ENCODE measurements at regions of chr1 and their contacts with region 1.

Region 1: GRCh38 chr1:2300851-2301606 is 72.9 kb downstream of the SKI start:
- DNase-seq: no peak
- H3K4me3 ChIP-seq: no peak overlapping the region
- H3K27ac ChIP-seq: no peak overlapping the region
- H3K4me1 ChIP-seq: peaks cover 33% of the 10 kb centered on the region
- H3K27me3 ChIP-seq: no peaks in the 10 kb centered on the region
- CTCF ChIP-seq: no peak

Region 2: GRCh38 chr1:2229037-2229864 is 71.8 kb before region 1 on chr1:
- CTCF ChIA-PET with region 1: no interaction called
- dilution Hi-C with region 1: loop called (anchors 5 kb)
- in situ Hi-C with region 1: no loop called
- intact Hi-C with region 1: no loop called
- DNase-seq: peak; percentile 53
- H3K4me3 ChIP-seq: peak overlapping the region; percentile 57 to 81 (median 68)
- H3K27ac ChIP-seq: peak overlapping the region; percentile 61
- H3K4me1 ChIP-seq: peaks cover 39% of the 10 kb centered on the region
- H3K27me3 ChIP-seq: no peaks in the 10 kb centered on the region
- CTCF ChIP-seq: no peak

Region 3: GRCh38 chr1:2270260-2271100 is 30.5 kb before region 1 on chr1:
- CTCF ChIA-PET with region 1: no interaction called
- dilution Hi-C with region 1: loop called (anchors 5 kb)
- in situ Hi-C with region 1: no loop called
- intact Hi-C with region 1: no loop called
- DNase-seq: no peak
- H3K4me3 ChIP-seq: no peak overlapping the region
- H3K27ac ChIP-seq: no peak overlapping the region
- H3K4me1 ChIP-seq: peaks cover 17% of the 10 kb centered on the region
- H3K27me3 ChIP-seq: no peaks in the 10 kb centered on the region
- CTCF ChIP-seq: no peak

Region 4: DNA sequence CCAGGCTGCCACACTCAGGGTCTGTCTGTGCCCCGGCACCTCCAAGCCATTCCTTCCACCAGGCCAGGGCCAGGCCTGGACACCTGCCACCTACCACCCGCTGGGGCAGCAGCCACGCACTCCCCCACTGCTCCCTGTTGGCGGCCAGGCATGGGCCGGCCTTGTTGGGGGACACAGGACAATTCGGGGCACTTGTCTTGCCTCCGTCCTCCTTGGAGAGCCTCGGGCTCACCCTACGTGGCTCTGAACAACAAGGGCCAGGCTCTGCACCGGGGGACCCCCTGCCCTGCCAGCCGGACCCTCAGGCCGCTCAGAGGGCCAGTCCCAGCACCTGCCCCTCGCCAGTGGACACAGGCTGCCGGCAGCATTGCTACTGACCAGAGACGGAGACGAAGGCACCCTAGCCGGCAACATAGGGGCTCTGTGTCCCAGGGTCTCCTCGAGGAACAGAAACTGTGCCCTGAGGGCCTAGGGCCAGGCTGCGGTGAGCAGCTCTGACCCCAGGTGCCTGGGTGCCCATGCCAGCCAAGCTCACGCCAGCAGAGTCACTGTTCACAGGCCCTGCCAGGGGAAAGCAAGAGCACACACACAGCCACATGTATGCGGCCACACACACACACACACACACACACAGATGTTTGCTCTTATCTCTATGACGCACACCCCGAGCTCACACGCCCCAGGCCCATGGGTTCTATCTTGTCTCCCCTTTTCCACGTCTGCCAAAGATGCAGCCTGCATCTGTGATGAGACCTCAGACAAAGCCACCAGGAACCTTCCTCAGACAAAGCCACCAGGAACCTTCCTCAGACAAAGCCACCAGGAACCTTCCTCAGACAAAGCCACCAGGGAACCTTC is 44.4 kb after region 1 on chr1:
- CTCF ChIA-PET with region 1: no interaction called
- dilution Hi-C with region 1: loop called (anchors 5 kb)
- in situ Hi-C with region 1: no loop called
- intact Hi-C with region 1: no loop called
- DNase-seq: no peak
- H3K4me3 ChIP-seq: no peak overlapping the region
- H3K27ac ChIP-seq: no peak overlapping the region
- H3K4me1 ChIP-seq: peaks cover 7% of the 10 kb centered on the region
- H3K27me3 ChIP-seq: no peaks in the 10 kb centered on the region
- CTCF ChIP-seq: no peak

Region 5: GRCh38 chr1:2404840-2405476 is 103.9 kb after region 1 on chr1:
- CTCF ChIA-PET with region 1: no interaction called
- dilution Hi-C with region 1: loop called (anchors 5 kb)
- in situ Hi-C with region 1: no loop called
- intact Hi-C with region 1: no loop called
- DNase-seq: no peak
- H3K4me3 ChIP-seq: no peak overlapping the region
- H3K27ac ChIP-seq: no peak overlapping the region
- H3K4me1 ChIP-seq: no peaks in the 10 kb centered on the region
- H3K27me3 ChIP-seq: no peaks in the 10 kb centered on the region
- CTCF ChIP-seq: no peak

Region 6: GRCh38 chr1:2429780-2430591 is 129.0 kb after region 1 on chr1:
- CTCF ChIA-PET with region 1: no interaction called
- dilution Hi-C with region 1: no loop called
- in situ Hi-C with region 1: no loop called
- intact Hi-C with region 1: no loop called
- DNase-seq: no peak
- H3K4me3 ChIP-seq: peak overlapping the region; percentile 70 to 83 (median 75)
- H3K27ac ChIP-seq: peak overlapping the region; percentile 74
- H3K4me1 ChIP-seq: peaks cover 54% of the 10 kb centered on the region
- H3K27me3 ChIP-seq: no peaks in the 10 kb centered on the region
- CTCF ChIP-seq: peak; percentile 63 to 79